Activated CD4-positive, alpha-beta T cell treated with anti-CD3 and anti-CD28 coated beads, Interleukin-2, amount 10 ng/mL, durations not matched to agents 24 days and 14 days (primary cell): ENCODE measurements at regions of chr17 and their contacts with region 1.

Region 1: DNA sequence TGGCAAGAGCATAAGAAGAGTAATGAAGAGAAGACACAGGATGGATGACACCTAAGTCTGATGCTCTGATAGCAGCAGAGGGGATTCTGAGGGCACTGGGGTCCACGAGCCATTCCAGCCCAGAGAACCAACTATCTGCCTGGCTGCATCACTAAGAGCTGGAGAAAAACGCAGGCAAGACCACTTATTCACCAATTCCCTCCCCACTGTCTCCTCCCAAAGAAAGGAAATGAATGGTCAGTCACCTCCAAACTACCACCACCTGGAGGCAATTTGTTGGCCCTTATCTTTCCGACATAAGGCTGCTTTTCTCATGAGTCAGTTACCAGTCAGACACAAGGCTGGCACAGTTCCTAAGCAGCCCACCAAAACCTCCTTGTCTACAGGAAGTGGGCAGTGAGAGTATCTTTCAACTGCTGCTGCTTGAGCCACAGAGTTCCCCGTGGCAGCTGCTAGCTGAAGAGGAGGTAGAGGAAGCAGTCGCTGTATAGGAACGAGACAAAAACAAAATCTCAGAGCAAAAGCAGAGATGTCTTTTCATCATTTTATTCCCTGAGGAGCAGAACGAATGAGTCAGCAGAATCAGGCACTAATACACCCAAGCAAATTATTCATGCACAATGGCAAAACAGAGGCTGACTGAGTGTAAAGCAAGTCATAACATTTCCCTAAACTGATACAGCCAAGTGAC is 111.1 kb downstream of the SMG6 start:
- DNase-seq: peak; percentile 81
- H3K4me3 Mint-ChIP-seq: peak overlapping the region; percentile 57
- H3K27ac Mint-ChIP-seq: peak overlapping the region; percentile 77
- H3K4me1 Mint-ChIP-seq: peaks cover 64% of the 10 kb centered on the region
- H3K27me3 Mint-ChIP-seq: no peaks in the 10 kb centered on the region

Region 2: GRCh38 chr17:2215616-2216364 is 23.3 kb after region 1 on chr17:
- intact Hi-C with region 1: loop called (anchors 2 kb)
- DNase-seq: peak; percentile 92
- H3K4me3 Mint-ChIP-seq: peak overlapping the region; percentile 84
- H3K27ac Mint-ChIP-seq: peak overlapping the region; percentile 96
- H3K4me1 Mint-ChIP-seq: peaks cover 51% of the 10 kb centered on the region
- H3K27me3 Mint-ChIP-seq: no peaks in the 10 kb centered on the region

Region 3: GRCh38 chr17:2275722-2276121 is 83.2 kb after region 1 on chr17:
- intact Hi-C with region 1: loop called (anchors 5 kb)
- DNase-seq: peak; percentile 84
- H3K4me3 Mint-ChIP-seq: peak overlapping the region; percentile 23
- H3K27ac Mint-ChIP-seq: peak overlapping the region; percentile 52
- H3K4me1 Mint-ChIP-seq: peaks cover 56% of the 10 kb centered on the region
- H3K27me3 Mint-ChIP-seq: no peaks in the 10 kb centered on the region